ENCODE measurements at regions of chr11 and their contacts with region 1.

Region 1: DNA sequence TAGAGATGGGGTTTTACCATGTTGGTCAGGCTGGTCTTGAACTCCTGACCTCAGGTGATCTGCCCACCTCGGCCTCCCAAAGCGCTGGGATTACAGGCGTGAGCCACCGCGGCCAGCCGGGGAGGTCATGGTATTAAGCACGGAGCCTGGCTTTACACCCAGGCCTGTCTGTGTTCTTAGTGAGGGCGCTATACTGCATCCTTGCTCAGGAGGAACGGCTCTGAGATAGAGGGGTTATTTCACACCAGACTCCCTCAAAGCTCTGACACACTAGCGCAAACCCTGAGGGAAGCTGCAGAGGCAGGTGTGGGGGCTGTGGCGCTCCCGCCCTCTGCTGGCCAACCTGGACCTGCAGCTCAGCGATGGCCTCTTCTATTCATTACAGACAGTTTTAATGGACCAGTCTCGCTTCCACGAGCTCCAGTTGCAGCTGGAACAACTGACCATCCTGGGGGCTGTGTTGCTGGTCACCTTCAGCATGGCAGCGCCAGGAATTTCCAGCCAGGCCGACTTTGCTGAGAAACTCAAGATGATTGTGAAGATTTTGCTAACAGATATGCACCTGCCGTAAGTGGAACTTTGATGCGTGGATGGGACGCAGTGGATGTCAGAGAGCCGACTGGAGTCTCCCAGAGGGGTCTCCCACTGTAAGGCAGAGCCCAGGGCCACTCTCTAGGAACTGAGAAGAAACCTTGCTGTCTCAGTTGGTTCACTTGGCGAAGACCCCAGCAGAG is 26.2 kb downstream of the TCP11L1 start:
- DNase-seq: peak; percentile 52
- ATAC-seq: peak; percentile 92
- H3K4me3 Mint-ChIP-seq: no peak overlapping the region
- H3K27ac Mint-ChIP-seq: no peak overlapping the region
- H3K4me1 Mint-ChIP-seq: peaks cover 27% of the 10 kb centered on the region
- H3K27me3 Mint-ChIP-seq: no peaks in the 10 kb centered on the region
- CTCF ChIP-seq: peak; percentile 30

Region 2: DNA sequence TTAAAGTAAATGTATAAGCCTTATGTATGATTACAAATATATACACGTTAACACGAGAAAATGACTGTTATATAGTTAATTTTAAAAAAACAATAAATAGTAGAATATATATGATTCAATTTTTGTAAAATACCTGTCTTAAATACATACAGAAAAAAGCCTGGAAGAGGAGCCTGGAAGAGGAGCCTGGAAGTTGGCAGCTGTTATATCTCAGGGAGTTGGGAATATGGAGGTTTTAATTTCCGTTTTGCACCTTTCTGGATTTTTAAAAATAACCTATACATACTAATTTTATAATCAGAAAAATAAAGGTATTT is 741.8 kb before region 1 on chr11:
- CTCF ChIA-PET with region 1: no interaction called
- POLR2A ChIA-PET with region 1: no interaction called
- intact Hi-C with region 1: loop called (anchors 5 kb)
- DNase-seq: no peak
- ATAC-seq: no peak
- H3K4me3 Mint-ChIP-seq: no peak overlapping the region
- H3K27ac Mint-ChIP-seq: no peak overlapping the region
- H3K4me1 Mint-ChIP-seq: no peaks in the 10 kb centered on the region
- H3K27me3 Mint-ChIP-seq: peaks cover 7% of the 10 kb centered on the region
- CTCF ChIP-seq: no peak

Region 3: DNA sequence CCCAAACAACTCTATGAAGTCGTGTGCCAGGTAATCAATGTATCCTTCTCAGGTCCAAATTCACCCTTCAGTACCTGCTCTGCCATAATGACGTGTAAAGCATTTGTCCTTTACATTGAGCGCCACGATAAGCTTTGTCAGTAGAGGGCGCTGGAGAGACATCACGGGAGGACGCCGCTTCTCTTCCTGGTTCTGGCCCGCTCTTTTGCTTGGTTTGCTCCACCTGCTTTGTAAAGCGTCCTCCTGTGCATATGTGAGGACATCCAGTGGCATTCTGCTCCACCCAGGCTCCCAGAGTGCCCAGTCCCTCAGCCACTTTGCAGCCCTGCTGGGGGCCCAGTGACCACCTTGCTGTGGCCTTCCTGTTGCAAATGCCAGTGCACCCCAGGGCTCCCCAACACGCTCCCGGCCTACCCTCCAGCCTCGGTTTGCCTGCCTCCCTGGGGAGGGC is 691.3 kb before region 1 on chr11:
- CTCF ChIA-PET with region 1: no interaction called
- POLR2A ChIA-PET with region 1: no interaction called
- intact Hi-C with region 1: no loop called
- DNase-seq: no peak
- ATAC-seq: no peak
- H3K4me3 Mint-ChIP-seq: no peak overlapping the region
- H3K27ac Mint-ChIP-seq: no peak overlapping the region
- H3K4me1 Mint-ChIP-seq: no peaks in the 10 kb centered on the region
- H3K27me3 Mint-ChIP-seq: no peaks in the 10 kb centered on the region
- CTCF ChIP-seq: no peak

Region 4: DNA sequence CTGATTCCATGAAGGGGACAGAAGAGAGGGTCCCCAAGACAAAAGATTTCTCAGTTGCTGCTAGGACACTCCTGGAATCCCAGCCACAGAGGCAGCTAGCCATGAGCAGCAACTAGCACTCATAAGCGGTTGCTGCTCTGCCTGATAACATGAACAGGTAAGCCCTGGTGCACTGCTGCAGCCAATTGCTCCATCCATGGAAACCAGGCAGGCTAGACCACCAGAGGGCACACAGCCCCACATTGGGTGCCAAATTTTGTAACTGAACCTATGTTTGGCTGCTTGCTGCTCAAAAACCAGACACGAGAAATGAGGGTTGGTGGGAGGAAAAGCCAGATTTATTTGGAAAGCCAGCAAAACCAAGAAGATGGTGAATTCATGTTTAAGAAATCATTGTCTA is 194.9 kb before region 1 on chr11:
- CTCF ChIA-PET with region 1: no interaction called
- POLR2A ChIA-PET with region 1: no interaction called
- intact Hi-C with region 1: loop called (anchors 1 kb)
- DNase-seq: no peak
- ATAC-seq: no peak
- H3K4me3 Mint-ChIP-seq: no peak overlapping the region
- H3K27ac Mint-ChIP-seq: no peak overlapping the region
- H3K4me1 Mint-ChIP-seq: no peaks in the 10 kb centered on the region
- H3K27me3 Mint-ChIP-seq: peaks cover 11% of the 10 kb centered on the region
- CTCF ChIP-seq: no peak

Region 5: GRCh38 chr11:32960553-32961164 is 105.0 kb before region 1 on chr11:
- CTCF ChIA-PET with region 1: interaction called, 40 read pairs
- POLR2A ChIA-PET with region 1: interaction called, 3 read pairs
- intact Hi-C with region 1: loop called (anchors 1 kb)
- DNase-seq: no peak
- ATAC-seq: no peak
- H3K4me3 Mint-ChIP-seq: no peak overlapping the region
- H3K27ac Mint-ChIP-seq: no peak overlapping the region
- H3K4me1 Mint-ChIP-seq: no peaks in the 10 kb centered on the region
- H3K27me3 Mint-ChIP-seq: no peaks in the 10 kb centered on the region
- CTCF ChIP-seq: no peak

Region 6: GRCh38 chr11:33039274-33040032 is 26.2 kb before region 1 on chr11 and contains the start of gene TCP11L1:
- CTCF ChIA-PET with region 1: interaction called, 14 read pairs
- POLR2A ChIA-PET with region 1: interaction called, 7 read pairs
- intact Hi-C with region 1: no loop called
- DNase-seq: peak; percentile 77
- ATAC-seq: peak; percentile 85
- H3K4me3 Mint-ChIP-seq: peak within 1 kb of the TSS; percentile 95
- H3K27ac Mint-ChIP-seq: peak within 1 kb of the TSS; percentile 95
- H3K4me1 Mint-ChIP-seq: peaks cover 13% of the 10 kb centered on the region
- H3K27me3 Mint-ChIP-seq: peaks cover 8% of the 10 kb centered on the region
- CTCF ChIP-seq: no peak
- total RNA-seq, gene TCP11L1: 13.5 and 17.7 TPM in 2 replicates